Caco-2 (cell line): ENCODE measurements at regions of chr2 and their contacts with region 1.

Region 1: GRCh38 chr2:126971481-126972278 is 73.0 kb downstream of the TEX51 start:
- DNase-seq: peak; percentile 72 to 81
- H3K4me3 ChIP-seq: no peak overlapping the region
- H3K4me3 Mint-ChIP-seq: peak overlapping the region; percentile 33
- H3K27ac Mint-ChIP-seq: no peak overlapping the region
- H3K4me1 ChIP-seq: peaks cover 3% of the 10 kb centered on the region; the same call in 1 of the 2 replicates
- H3K4me1 Mint-ChIP-seq: peaks cover 11% of the 10 kb centered on the region
- H3K27me3 ChIP-seq: no peaks in the 10 kb centered on the region
- H3K27me3 Mint-ChIP-seq: peaks cover 7% of the 10 kb centered on the region
- CTCF ChIP-seq: peak; percentile 84 to 96

Region 2: DNA sequence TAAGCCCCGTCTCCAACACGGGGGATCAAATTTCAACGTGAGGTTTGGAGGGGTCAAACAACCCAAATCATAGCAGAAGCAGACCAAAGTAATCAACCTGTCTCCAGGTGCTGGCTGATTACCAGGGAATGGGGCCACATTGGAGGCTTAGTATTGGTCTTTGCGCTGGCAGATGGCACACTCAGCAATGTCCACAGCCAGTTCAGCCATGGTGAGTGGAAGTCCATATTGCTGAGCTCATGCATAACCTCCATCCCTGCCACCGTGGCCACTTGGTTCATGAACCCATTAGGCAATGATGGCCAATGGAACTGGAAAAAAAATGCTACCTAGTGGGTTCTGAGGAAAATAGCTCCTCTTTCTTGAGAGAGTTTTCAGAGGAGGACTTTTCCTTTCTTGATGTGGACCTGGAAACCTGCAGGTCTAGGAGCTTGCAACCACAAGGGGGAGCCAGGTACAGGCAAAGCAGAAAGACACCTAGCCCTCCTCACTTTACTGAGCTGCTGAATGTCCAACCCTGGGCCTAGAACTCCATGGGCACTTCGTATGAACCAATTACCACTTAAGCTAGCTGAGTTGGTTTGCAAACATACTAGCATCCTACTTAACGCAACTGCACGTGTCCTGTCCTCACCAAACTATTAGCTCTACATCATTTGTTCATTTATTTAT is 443.7 kb before region 1 on chr2:
- CTCF ChIA-PET with region 1: interaction called, 14 read pairs
- POLR2A ChIA-PET with region 1: no interaction called
- intact Hi-C with region 1: no loop called
- DNase-seq: peak; percentile 66 to 68
- H3K4me3 ChIP-seq: no peak overlapping the region
- H3K4me3 Mint-ChIP-seq: no peak overlapping the region
- H3K27ac Mint-ChIP-seq: no peak overlapping the region
- H3K4me1 ChIP-seq: no peaks in the 10 kb centered on the region
- H3K4me1 Mint-ChIP-seq: no peaks in the 10 kb centered on the region
- H3K27me3 ChIP-seq: no peaks in the 10 kb centered on the region
- H3K27me3 Mint-ChIP-seq: peaks cover 5% of the 10 kb centered on the region
- CTCF ChIP-seq: peak; percentile 58 to 76

Region 3: GRCh38 chr2:126793885-126794613 is 177.6 kb before region 1 on chr2:
- CTCF ChIA-PET with region 1: interaction called, 7 read pairs
- POLR2A ChIA-PET with region 1: no interaction called
- intact Hi-C with region 1: loop called (anchors 2 kb)
- DNase-seq: peak in 1 of 2 experiments; percentile 42
- H3K4me3 ChIP-seq: no peak overlapping the region
- H3K4me3 Mint-ChIP-seq: no peak overlapping the region
- H3K27ac Mint-ChIP-seq: no peak overlapping the region
- H3K4me1 ChIP-seq: no peaks in the 10 kb centered on the region
- H3K4me1 Mint-ChIP-seq: no peaks in the 10 kb centered on the region
- H3K27me3 ChIP-seq: no peaks in the 10 kb centered on the region
- H3K27me3 Mint-ChIP-seq: peaks cover 19% of the 10 kb centered on the region
- CTCF ChIP-seq: no peak

Region 4: DNA sequence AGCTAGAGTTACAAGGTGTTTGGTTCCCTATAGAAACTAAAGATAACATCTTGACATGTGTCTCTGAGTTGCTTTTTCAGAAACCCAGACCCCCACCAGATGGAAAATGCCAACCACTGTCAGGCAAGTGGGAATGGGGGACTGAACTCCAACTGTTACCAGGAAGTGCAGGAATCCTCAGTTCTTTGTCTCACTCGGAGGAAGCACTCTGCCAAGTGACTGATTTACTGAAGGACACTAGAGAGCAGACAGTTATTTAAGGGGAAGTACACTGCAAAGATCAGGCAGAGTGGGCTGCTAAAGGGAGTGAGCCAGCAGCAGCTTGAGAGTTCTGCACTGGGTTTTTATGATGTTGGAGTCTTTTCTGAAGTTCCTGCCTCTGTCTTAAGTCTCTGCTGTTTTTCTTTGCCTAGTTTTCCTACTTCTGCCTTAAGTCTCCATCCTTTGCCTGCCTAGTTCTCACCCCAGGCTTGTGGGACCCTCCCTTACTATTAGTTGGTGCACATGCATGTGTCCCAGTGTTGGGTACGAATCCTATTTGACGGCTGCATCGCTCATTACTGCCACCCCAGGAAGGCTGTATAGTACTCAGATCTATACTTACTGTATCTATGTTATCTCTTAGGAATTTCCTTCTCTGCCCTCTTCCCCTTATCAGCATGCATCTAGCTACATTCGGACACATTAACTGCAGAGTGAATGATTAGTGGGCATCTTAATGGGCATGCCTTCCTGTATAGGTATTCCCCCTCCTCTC is 24.1 kb after region 1 on chr2:
- CTCF ChIA-PET with region 1: interaction called, 15 read pairs
- POLR2A ChIA-PET with region 1: no interaction called
- intact Hi-C with region 1: loop called (anchors 1 kb)
- DNase-seq: peak in 1 of 2 experiments; percentile 64
- H3K4me3 ChIP-seq: no peak overlapping the region
- H3K4me3 Mint-ChIP-seq: peak overlapping the region; percentile 53
- H3K27ac Mint-ChIP-seq: peak overlapping the region; percentile 74
- H3K4me1 ChIP-seq: peaks cover 45% of the 10 kb centered on the region
- H3K4me1 Mint-ChIP-seq: peaks cover 33% of the 10 kb centered on the region
- H3K27me3 ChIP-seq: no peaks in the 10 kb centered on the region
- H3K27me3 Mint-ChIP-seq: no peaks in the 10 kb centered on the region
- CTCF ChIP-seq: no peak

Region 5: DNA sequence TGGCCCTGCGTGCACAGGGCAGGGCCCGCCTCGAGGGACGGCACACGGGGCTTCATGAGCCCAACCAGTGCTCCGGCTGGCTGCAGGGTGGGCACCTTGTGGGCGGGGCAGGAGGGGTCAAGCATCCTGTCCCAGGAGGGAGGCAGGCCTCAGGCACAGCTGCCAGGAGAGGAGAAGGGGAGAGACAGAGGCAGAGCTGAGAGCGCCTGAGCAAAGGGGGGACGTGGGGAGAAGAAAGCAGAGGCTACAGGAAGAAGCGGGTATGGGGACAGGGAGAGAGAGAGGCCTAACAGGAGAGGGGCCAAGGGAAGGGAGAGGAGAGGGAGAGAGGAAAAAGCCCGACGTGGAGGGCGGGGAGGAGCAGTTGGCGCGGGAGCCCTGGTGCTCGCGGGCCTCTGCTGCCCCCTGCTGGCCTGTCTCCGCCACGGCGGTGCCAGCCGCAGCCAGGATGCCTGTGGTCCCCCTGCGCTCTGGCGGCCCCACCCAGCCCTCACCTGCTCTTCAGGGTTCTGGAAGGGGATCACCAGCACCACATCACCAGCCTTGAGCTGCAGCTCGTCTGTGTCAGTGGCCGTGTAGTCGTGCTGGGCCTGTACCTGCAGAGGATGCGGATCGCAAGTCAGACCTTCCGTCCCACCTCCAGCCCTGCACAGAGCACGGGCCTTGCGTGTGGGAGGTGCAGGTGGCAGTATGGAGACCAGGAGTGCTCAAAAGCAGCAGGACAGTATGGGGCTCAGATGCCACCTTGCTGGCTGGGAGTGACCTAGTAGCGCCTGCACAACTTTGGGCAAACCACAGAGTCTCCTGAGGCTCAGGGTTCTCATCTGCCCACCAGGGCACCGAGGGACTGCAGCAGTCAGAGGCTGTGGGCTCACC is 78.5 kb after region 1 on chr2:
- CTCF ChIA-PET with region 1: no interaction called
- POLR2A ChIA-PET with region 1: no interaction called
- intact Hi-C with region 1: loop called (anchors 1 kb)
- DNase-seq: peak; percentile 46 to 77
- H3K4me3 ChIP-seq: no peak overlapping the region
- H3K4me3 Mint-ChIP-seq: no peak overlapping the region
- H3K27ac Mint-ChIP-seq: no peak overlapping the region
- H3K4me1 ChIP-seq: peaks cover 9% of the 10 kb centered on the region; the same call in 1 of the 2 replicates
- H3K4me1 Mint-ChIP-seq: peaks cover 14% of the 10 kb centered on the region
- H3K27me3 ChIP-seq: no peaks in the 10 kb centered on the region
- H3K27me3 Mint-ChIP-seq: no peaks in the 10 kb centered on the region
- CTCF ChIP-seq: peak; percentile 87 to 97